Activated CD8-positive, alpha-beta T cell treated with anti-CD3 and anti-CD28 coated beads for 36 hours (primary cell): ENCODE measurements at regions of chr17 and their contacts with region 1.

Region 1: GRCh38 chr17:29807520-29808351 is 122.3 kb downstream of the SSH2 start:
- DNase-seq: peak; percentile 81
- ATAC-seq: peak; percentile 77
- H3K4me3 Mint-ChIP-seq: no peak overlapping the region
- H3K27ac Mint-ChIP-seq: no peak overlapping the region
- H3K4me1 Mint-ChIP-seq: peaks cover 14% of the 10 kb centered on the region
- H3K27me3 Mint-ChIP-seq: no peaks in the 10 kb centered on the region
- CTCF ChIP-seq: peak; percentile 90

Region 2: GRCh38 chr17:29640413-29640812 is 167.3 kb before region 1 on chr17:
- CTCF ChIA-PET with region 1: interaction called, 19 read pairs
- POLR2A ChIA-PET with region 1: no interaction called
- intact Hi-C with region 1: no loop called
- DNase-seq: no peak
- ATAC-seq: no peak
- H3K4me3 Mint-ChIP-seq: no peak overlapping the region
- H3K27ac Mint-ChIP-seq: peak overlapping the region; percentile 87
- H3K4me1 Mint-ChIP-seq: peaks cover 34% of the 10 kb centered on the region
- H3K27me3 Mint-ChIP-seq: no peaks in the 10 kb centered on the region
- CTCF ChIP-seq: no peak

Region 3: DNA sequence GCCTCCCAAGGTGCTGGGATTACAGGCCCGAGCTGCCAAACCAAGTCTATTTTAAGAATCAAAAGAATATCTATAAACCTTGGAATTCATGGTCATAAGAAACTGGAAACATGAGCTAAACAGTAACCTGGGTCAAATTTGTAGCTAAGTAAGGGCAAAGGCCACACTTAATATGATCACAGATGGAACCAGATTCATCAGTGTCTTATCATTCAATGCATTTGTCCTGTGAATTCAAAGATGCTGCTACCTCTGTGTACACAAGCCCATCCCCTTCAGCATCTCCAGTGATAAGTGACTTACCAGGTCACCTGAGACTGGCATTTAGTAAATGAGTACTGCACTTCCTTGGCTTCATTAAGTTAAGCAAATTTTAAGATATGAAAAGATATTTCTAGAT is 14.2 kb after region 1 on chr17:
- CTCF ChIA-PET with region 1: interaction called, 18 read pairs
- POLR2A ChIA-PET with region 1: no interaction called
- intact Hi-C with region 1: no loop called
- DNase-seq: no peak
- ATAC-seq: no peak
- H3K4me3 Mint-ChIP-seq: no peak overlapping the region
- H3K27ac Mint-ChIP-seq: no peak overlapping the region
- H3K4me1 Mint-ChIP-seq: peaks cover 10% of the 10 kb centered on the region
- H3K27me3 Mint-ChIP-seq: no peaks in the 10 kb centered on the region
- CTCF ChIP-seq: no peak

Region 4: DNA sequence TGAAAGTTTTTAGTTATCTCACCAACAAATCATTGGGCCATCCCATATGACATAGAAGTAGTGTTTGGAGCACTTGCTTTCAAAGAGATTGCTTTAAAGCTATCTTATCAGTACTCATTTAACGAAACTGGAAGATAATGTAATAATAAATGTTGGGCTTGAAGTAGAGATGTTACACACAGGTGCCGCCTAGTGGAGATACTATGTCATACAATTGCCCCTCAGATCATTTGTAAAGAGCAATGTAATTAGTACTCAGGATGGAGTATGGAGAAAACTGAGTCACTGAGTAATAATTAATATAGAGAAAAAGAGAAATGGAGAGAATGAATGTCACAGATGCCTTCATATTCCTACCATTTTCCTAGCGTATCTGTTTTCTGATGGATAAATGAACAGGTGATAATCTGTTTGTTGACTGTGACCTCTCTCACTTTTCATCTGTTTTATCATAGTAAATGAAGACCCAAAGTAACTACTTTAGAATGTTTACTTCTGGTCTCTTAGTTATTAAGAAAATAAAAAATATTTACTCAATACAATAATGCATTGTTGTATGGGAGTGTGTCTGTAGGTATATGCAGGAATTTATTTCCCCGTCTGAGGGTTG is 214.1 kb after region 1 on chr17:
- CTCF ChIA-PET with region 1: interaction called, 12 read pairs
- POLR2A ChIA-PET with region 1: no interaction called
- intact Hi-C with region 1: loop called (anchors 10 kb)
- DNase-seq: peak; percentile 60
- ATAC-seq: peak; percentile 53
- H3K4me3 Mint-ChIP-seq: no peak overlapping the region
- H3K27ac Mint-ChIP-seq: no peak overlapping the region
- H3K4me1 Mint-ChIP-seq: no peaks in the 10 kb centered on the region
- H3K27me3 Mint-ChIP-seq: peaks cover 3% of the 10 kb centered on the region
- CTCF ChIP-seq: peak; percentile 95